ENCODE measurements at regions of chr16 and their contacts with region 1.

Region 1: DNA sequence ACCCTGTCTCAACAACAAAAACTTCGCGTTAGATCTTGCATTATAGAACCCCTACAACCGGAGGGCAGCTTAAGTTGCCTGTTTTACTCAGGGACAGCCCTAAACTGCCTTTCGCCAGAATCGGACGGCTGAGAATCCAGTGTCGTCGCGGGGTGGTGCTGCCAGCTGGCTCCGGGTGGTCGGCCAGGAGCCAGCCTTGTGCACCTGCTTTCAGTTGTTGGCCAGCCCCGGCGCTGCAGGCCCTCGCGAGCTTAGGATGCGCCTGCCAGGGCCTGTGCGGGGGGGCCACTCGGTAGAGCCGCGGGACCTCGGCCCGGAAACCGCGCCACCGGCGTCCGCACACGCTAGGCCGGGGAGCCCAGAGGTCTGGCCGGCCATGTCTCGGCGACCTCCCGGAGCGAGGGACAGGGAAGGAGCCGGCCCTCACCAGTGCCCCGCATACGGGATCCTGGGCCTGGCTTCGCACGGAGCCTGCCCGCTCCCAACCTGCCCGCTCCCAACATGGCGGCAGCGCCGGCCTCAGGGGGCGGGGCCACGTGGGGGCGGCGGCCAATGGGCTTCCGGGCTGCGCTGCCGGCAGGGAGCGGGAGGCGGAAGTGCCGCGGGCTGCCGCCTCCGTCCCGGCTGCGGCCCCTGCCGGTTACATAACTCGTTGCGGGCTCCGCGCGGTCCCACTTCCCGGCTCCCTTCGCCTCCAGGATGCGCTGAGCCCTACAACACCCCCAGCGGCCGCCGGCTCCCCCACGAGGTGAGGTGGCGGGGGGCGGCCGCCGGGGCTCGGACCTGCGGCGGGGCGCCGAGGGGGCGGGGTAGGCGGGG is 14.2 kb downstream of the NAA60 start:
- DNase-seq: peak; percentile 92
- H3K4me3 Mint-ChIP-seq: peak overlapping the region; percentile 80
- H3K27ac Mint-ChIP-seq: peak overlapping the region; percentile 90
- H3K4me1 Mint-ChIP-seq: peaks cover 41% of the 10 kb centered on the region
- H3K27me3 Mint-ChIP-seq: no peaks in the 10 kb centered on the region

Region 2: DNA sequence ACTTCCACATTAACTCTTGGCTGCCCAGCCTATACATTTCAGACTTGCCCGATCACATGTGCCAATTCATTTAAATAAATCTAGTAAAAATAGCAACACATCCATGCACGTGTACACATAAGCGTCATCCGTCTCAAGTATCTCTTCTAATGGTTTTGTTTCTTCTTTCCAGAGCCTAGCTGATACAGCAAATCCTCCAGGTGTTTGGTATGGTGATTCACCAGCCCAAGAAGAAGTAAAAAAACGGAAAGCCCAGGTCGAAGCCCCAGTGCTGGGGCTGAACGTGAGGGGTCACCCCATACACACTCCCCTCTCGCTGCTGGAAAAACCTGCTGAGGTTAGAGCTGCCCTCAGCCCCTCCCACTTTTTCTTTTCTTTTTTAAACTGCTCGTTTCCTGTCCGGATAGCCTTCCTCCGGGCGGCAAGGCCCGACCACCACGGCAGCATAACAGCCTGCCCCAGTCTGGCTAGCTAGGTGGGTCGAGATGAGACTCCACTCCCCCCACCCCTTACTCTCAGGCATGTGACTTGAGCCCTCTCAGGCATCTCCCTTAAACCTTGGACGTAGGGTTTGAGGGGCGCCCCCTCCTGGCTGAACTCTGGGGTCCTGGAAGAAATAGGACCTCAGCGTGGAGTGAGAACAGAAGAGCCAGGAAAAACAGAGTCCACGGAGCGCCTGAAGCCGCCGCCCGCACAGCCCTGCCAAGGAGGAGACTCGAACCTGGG is 283.6 kb before region 1 on chr16:
- CTCF ChIA-PET with region 1: no interaction called
- POLR2A ChIA-PET with region 1: no interaction called
- intact Hi-C with region 1: loop called (anchors 5 kb)
- DNase-seq: peak; percentile 57
- H3K4me3 Mint-ChIP-seq: peak overlapping the region; percentile 71
- H3K27ac Mint-ChIP-seq: peak overlapping the region; percentile 19
- H3K4me1 Mint-ChIP-seq: peaks cover 34% of the 10 kb centered on the region
- H3K27me3 Mint-ChIP-seq: peaks cover 51% of the 10 kb centered on the region

Region 3: DNA sequence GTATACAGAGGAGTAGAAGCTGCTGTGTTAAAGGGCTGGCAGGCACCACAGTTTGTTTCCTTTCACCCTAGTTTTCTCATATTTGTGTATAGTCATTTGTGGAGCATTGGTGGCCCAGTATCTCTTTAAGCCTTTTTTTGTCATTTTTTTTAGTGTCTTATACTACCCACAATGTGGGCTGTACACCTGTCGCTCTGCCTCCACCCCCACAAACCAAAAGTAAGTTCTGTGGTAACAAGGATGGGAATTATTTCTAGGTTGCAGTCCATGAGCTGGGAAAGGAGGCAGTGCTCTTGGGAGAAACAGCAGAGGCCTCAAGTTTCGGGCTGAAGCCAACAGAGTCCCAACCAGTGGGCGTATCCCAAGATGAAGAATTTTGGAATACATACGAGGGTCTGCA is 146.1 kb before region 1 on chr16:
- CTCF ChIA-PET with region 1: no interaction called
- POLR2A ChIA-PET with region 1: no interaction called
- intact Hi-C with region 1: no loop called
- DNase-seq: no peak
- H3K4me3 Mint-ChIP-seq: no peak overlapping the region
- H3K27ac Mint-ChIP-seq: no peak overlapping the region
- H3K4me1 Mint-ChIP-seq: no peaks in the 10 kb centered on the region
- H3K27me3 Mint-ChIP-seq: no peaks in the 10 kb centered on the region

Region 4: DNA sequence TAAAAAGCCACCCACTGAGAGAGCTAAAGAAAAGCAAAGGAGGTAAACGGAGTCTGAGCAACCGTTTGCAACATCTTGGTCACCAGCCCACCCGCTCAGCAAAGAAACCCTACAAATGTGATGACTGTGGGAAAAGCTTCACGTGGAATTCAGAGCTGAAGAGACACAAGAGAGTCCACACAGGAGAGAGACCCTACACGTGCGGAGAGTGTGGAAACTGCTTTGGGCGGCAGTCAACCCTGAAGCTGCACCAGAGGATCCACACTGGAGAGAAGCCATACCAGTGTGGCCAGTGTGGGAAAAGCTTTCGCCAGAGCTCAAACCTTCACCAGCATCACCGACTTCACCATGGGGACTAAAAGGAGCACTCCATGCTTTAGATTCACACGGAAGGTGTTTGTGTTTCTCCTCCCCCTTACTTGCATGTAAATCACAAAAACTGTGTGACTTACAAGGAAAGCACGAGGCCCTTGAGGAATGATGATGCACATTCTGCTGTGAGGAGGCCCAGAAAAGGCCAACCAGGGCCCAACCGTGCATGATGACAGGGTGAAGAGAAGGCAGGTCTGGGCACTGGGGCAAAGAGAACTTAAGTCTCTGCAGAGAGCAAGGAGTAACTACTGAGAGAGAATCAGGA is 49.0 kb before region 1 on chr16:
- CTCF ChIA-PET with region 1: no interaction called
- POLR2A ChIA-PET with region 1: no interaction called
- intact Hi-C with region 1: no loop called
- DNase-seq: no peak
- H3K4me3 Mint-ChIP-seq: no peak overlapping the region
- H3K27ac Mint-ChIP-seq: no peak overlapping the region
- H3K4me1 Mint-ChIP-seq: peaks cover 5% of the 10 kb centered on the region
- H3K27me3 Mint-ChIP-seq: no peaks in the 10 kb centered on the region

Region 5: DNA sequence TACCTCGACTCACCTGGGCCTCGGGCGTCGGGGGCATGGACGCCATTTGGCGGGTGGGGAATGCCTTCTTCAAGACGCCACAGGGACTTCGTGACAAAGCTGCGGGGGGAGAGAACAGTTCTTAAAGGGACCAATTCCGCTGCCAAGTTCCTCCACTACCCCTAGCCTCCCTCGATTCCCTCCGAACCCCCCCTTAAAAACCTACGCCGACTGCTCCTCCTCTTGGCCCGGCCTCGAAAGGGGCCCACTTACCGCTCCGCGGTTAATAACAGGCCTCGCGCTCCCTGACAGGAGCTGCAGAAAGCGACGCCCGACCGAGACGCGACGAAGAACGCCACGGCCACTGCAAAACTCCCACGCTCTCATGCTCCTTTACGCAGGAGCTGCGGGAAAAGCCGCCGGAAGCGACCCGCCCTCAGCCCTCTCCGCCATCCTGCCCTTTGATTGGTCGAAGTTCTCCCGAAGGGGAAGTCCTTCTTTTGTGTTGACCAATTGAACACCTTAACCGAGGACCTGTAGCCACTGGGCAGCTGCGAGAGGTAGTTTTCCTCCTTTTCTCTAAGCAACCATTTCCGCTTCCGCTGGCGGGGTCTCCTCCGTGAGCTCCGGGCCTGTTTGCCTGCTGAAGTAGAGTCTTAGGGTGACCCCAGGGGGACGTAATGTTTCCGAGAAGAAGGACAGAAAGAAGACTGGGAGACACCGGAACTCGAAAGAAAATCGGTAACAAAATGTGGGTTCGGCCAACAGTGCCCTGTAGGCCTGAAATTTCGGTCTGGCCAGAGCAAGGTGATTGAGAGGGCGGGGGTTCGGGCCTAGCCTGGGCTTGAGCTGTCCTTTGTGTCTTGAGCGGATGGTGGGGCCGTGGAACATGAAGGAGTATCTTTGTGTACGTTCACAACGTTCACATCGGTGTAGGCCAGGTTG is 14.3 kb before region 1 on chr16 and contains the starts of genes NAA60 and ZNF597:
- CTCF ChIA-PET with region 1: interaction called, 3 read pairs
- POLR2A ChIA-PET with region 1: interaction called, 10 read pairs
- intact Hi-C with region 1: loop called (anchors 1 kb)
- DNase-seq: peak; percentile 89
- H3K4me3 Mint-ChIP-seq: peak within 1 kb of the TSS; percentile 97
- H3K27ac Mint-ChIP-seq: peak within 1 kb of the TSS; percentile 95
- H3K4me1 Mint-ChIP-seq: peaks cover 15% of the 10 kb centered on the region
- H3K27me3 Mint-ChIP-seq: no peaks in the 10 kb centered on the region
- total RNA-seq, gene NAA60: 26.9 to 34.1 TPM
- total RNA-seq, gene ZNF597: 1.6 to 2.1 TPM

Region 6: DNA sequence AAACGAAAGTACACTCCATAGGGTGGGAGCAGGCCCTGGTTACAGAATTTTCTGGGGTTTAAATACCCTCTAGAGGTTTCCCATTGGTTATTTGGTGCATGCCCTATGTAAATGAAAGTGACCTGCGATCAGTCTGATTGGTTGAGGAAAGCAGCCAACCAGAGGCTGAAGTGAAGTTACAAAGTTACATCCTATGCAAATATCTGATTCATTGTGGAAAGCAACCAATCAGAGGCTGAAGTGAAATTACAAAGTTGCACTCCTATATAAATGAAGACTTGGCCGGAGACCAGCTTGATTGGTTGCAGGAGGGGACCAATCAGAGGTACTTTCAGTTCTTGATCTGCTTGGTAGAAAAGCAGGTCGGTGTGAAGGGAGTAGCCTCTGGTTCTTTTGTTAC is 10.3 kb after region 1 on chr16:
- CTCF ChIA-PET with region 1: no interaction called
- POLR2A ChIA-PET with region 1: no interaction called
- intact Hi-C with region 1: no loop called
- DNase-seq: no peak
- H3K4me3 Mint-ChIP-seq: no peak overlapping the region
- H3K27ac Mint-ChIP-seq: peak overlapping the region; percentile 43
- H3K4me1 Mint-ChIP-seq: peaks cover 56% of the 10 kb centered on the region
- H3K27me3 Mint-ChIP-seq: no peaks in the 10 kb centered on the region

Region 7: GRCh38 chr16:3787924-3788661 is 330.4 kb after region 1 on chr16:
- CTCF ChIA-PET with region 1: no interaction called
- POLR2A ChIA-PET with region 1: no interaction called
- intact Hi-C with region 1: no loop called
- DNase-seq: no peak
- H3K4me3 Mint-ChIP-seq: no peak overlapping the region
- H3K27ac Mint-ChIP-seq: no peak overlapping the region
- H3K4me1 Mint-ChIP-seq: peaks cover 27% of the 10 kb centered on the region
- H3K27me3 Mint-ChIP-seq: no peaks in the 10 kb centered on the region

Measured in activated CD4-positive, alpha-beta memory T cell treated with anti-CD3 and anti-CD28 coated beads for 36 hours (primary cell).